Right ventricle myocardium inferior (tissue), 1 donor: ENCODE measurements at regions of chr6 and their contacts with region 1.

Region 1: DNA sequence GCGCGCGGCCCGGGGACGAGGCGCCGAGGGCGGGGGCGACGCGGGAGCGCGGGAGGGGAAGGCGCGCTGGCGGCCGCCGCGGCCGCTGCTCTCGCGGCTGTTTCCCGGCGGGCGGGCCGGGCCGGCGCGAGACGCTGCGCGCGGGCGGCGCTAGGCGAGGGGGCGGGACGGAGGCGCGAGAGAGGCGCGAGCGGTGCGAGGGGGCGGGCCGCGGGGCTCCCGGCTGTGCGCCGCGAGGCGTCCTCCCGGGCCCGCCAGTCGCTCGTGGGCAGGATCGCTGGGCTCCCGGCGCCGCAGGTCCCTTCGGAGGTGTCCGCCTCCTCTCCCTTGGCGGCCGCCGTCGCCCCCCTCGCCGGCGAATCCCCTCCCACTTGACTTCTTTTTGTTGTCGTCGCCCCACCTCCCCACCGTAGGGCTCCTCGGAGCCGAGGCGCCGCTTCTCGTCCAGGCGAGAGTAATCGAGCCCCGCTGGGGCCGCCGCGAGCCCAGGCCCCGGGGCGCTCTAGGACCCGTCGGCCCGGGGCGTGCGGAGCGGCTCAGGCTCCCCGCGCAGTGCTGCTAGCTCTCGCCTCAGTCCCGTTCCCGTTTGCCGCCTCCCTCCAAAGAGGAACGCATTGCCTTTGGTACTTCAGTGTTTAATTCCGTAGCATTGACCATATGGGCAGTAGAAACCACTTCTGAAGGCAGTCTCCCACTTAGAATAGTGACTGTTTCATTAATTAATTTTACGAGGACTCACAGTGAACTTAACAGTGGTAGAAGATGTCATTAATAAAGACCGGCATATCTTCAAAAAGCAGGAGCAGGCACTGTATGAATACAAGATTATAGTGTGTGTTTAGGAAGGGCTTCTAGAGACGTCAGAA is at the start of gene RANBP9:
- DNase-seq: peak; percentile 94
- ATAC-seq: peak; percentile 96
- total RNA-seq, gene RANBP9: 32.3 TPM

Region 2: GRCh38 chr6:13614926-13615798 is 96.8 kb before region 1 on chr6 and contains the start of gene NOL7:
- intact Hi-C with region 1: loop called (anchors 1 kb)
- DNase-seq: peak; percentile 96
- ATAC-seq: peak; percentile 99
- total RNA-seq, gene NOL7: 50.7 TPM

Region 3: GRCh38 chr6:13767121-13767808 is 55.3 kb after region 1 on chr6:
- intact Hi-C with region 1: loop called (anchors 5 kb)
- DNase-seq: no peak
- ATAC-seq: peak; percentile 80

Region 4: GRCh38 chr6:13814176-13814937 is 102.4 kb after region 1 on chr6 and contains the start of gene MCUR1:
- intact Hi-C with region 1: loop called (anchors 5 kb)
- DNase-seq: peak; percentile 96
- ATAC-seq: peak; percentile 97
- total RNA-seq, gene MCUR1: 33.9 TPM